Activated CD4-positive, alpha-beta T cell treated with anti-CD3 and anti-CD28 coated beads, Interleukin-2, amount 10 ng/mL, durations not matched to agents 7 days and 5 days (primary cell): ENCODE measurements at regions of chr5 and their contacts with region 1.

Region 1: DNA sequence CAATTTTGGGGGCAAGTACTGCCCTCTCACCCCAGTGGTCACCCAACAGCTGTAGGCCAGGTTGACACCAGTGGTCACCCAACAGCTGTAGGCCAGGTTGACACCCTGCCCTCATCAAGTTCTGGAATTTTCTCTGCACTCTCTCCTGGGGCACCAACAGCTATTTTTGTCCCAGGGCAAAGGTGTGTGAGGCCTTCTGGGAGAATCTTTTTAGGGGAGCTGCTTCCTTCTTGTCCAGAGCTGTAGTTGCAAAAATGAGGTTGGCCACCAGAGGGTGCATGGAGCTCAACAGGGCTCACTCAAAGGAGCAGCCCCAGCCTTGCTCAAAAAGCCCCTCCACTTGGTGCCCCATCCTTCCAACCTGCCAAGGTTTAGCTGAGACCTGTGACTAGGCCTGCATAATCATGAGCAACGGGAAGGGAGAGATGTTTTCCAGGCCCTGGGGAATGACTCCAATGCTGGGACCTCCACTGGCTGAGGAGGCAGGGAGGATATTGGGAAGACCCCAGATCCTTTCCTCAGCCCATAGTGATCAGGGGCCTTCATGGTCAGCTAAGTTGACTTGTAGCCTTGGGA is 10.6 kb upstream of the P4HA2 start:
- DNase-seq: peak; percentile 78
- H3K4me3 Mint-ChIP-seq: no peak overlapping the region
- H3K27ac Mint-ChIP-seq: no peak overlapping the region
- H3K4me1 Mint-ChIP-seq: no peaks in the 10 kb centered on the region
- H3K27me3 Mint-ChIP-seq: peaks cover 6% of the 10 kb centered on the region

Region 2: GRCh38 chr5:132225165-132226032 is 12.9 kb before region 1 on chr5:
- CTCF ChIA-PET with region 1: interaction called, 16 read pairs
- POLR2A ChIA-PET with region 1: interaction called, 4 read pairs
- DNase-seq: no peak
- H3K4me3 Mint-ChIP-seq: no peak overlapping the region
- H3K27ac Mint-ChIP-seq: no peak overlapping the region
- H3K4me1 Mint-ChIP-seq: peaks cover 7% of the 10 kb centered on the region
- H3K27me3 Mint-ChIP-seq: peaks cover 21% of the 10 kb centered on the region

Region 3: GRCh38 chr5:132251220-132251725 is 13.0 kb after region 1 on chr5:
- CTCF ChIA-PET with region 1: interaction called, 10 read pairs
- POLR2A ChIA-PET with region 1: no interaction called
- DNase-seq: no peak
- H3K4me3 Mint-ChIP-seq: no peak overlapping the region
- H3K27ac Mint-ChIP-seq: no peak overlapping the region
- H3K4me1 Mint-ChIP-seq: no peaks in the 10 kb centered on the region
- H3K27me3 Mint-ChIP-seq: peaks cover 13% of the 10 kb centered on the region

Region 4: GRCh38 chr5:132265336-132266030 is 27.2 kb after region 1 on chr5:
- CTCF ChIA-PET with region 1: interaction called, 11 read pairs
- POLR2A ChIA-PET with region 1: no interaction called
- DNase-seq: no peak
- H3K4me3 Mint-ChIP-seq: no peak overlapping the region
- H3K27ac Mint-ChIP-seq: no peak overlapping the region
- H3K4me1 Mint-ChIP-seq: peaks cover 1% of the 10 kb centered on the region
- H3K27me3 Mint-ChIP-seq: no peaks in the 10 kb centered on the region